Left lung (tissue), 14 donors: ENCODE measurements at regions of chr7 and their contacts with region 1.

Region 1: DNA sequence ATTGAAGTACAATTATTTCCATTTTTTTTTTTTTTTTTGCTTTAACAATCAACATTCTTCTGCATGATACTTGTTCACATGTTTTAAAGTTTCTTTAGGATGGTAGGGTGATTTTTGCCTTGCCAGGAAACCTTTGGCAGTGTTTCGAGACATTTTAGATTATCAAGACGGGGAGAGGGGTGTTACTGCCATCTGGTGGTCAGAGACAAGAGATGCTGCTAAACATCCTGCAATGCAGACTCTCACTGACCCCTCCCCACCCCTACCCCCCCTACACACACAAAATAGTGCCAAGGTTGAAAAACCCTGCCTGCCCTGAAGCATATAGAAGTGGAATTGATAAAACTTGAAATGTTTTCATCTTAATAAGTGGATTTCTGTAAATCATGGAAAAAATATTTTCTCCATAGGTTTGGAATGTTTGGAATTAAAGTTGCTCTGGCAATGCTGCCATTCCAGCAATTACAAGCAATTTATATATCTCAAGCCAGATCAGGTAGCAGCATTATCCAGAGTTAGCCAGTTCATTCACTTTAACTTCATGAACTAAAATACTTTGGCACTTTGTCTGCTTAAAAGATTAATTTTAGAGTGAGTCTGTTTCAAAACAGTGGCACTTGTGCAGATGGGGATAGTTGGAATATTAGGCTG is 62.1 kb downstream of the SDHAF3 start:
- DNase-seq: peak in 2 of 4 donors; percentile 36 to 66
- ATAC-seq: peak; percentile 87
- H3K4me3 ChIP-seq: no peak overlapping the region
- H3K27ac ChIP-seq: no peak overlapping the region
- H3K4me1 ChIP-seq: peaks cover 0 to under 1% of the 10 kb centered on the region in 2 donors
- H3K27me3 ChIP-seq: no peaks in the 10 kb centered on the region
- CTCF ChIP-seq: peak; percentile 69 to 82

Region 2: GRCh38 chr7:97104719-97105238 is 74.8 kb before region 1 on chr7:
- intact Hi-C with region 1: loop called in 1 of 2 experiments (anchors 10 kb)
- DNase-seq: peak; percentile 68 to 94 (median 82)
- ATAC-seq: peak; percentile 98
- H3K4me3 ChIP-seq: no peak overlapping the region
- H3K27ac ChIP-seq: no peak overlapping the region
- H3K4me1 ChIP-seq: peaks cover 0 to 8% of the 10 kb centered on the region in 2 donors
- H3K27me3 ChIP-seq: no peaks in the 10 kb centered on the region
- CTCF ChIP-seq: peak; percentile 71 to 82